Right cardiac atrium (tissue), 5 donors: ENCODE measurements at regions of chr18 and their contacts with region 1.

Region 1: GRCh38 chr18:11947214-11948191 is 33.8 kb upstream of the IMPA2 start:
- DNase-seq: peak; percentile 96 to 98 (median 97)
- ATAC-seq: peak; percentile 99
- H3K4me3 ChIP-seq: peak overlapping the region; percentile 52
- H3K27ac ChIP-seq: peak overlapping the region; percentile 91
- H3K4me1 ChIP-seq: no peaks in the 10 kb centered on the region
- H3K27me3 ChIP-seq: no peaks in the 10 kb centered on the region

Region 2: DNA sequence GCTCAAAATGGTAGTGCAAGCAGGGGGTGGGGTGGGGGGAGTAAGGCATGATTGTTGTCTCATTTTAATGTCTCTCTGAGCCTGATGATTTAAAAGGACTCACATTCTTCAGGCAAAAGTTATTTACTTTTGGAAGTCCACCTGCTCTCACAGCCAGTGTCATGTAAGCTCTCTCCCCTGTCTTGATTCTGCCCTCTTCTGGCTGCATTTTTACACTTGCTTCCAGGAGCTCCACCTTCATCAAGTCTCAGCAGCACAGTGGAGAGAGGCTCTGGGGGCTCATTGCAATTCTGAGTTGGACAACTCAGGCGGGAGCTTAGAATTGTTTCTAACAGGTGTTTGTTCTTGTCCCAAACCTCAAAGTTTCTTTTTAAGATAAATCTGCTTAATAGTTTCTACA is 219.3 kb before region 1 on chr18:
- intact Hi-C with region 1: no loop called
- DNase-seq: no peak
- ATAC-seq: no peak
- H3K4me3 ChIP-seq: no peak overlapping the region
- H3K27ac ChIP-seq: no peak overlapping the region
- H3K4me1 ChIP-seq: no peaks in the 10 kb centered on the region
- H3K27me3 ChIP-seq: no peaks in the 10 kb centered on the region

Region 3: GRCh38 chr18:11980555-11981382 is 33.3 kb after region 1 on chr18:
- intact Hi-C with region 1: loop called in 2 of 4 experiments (anchors 2 to 5 kb)
- DNase-seq: peak; percentile 97 to 99 (median 98)
- ATAC-seq: peak; percentile 96
- H3K4me3 ChIP-seq: peak overlapping the region; percentile 73
- H3K27ac ChIP-seq: peak overlapping the region; percentile 98
- H3K4me1 ChIP-seq: no peaks in the 10 kb centered on the region
- H3K27me3 ChIP-seq: no peaks in the 10 kb centered on the region